H1 (cell line): ENCODE measurements at regions of chr17 and their contacts with region 1.

Region 1: DNA sequence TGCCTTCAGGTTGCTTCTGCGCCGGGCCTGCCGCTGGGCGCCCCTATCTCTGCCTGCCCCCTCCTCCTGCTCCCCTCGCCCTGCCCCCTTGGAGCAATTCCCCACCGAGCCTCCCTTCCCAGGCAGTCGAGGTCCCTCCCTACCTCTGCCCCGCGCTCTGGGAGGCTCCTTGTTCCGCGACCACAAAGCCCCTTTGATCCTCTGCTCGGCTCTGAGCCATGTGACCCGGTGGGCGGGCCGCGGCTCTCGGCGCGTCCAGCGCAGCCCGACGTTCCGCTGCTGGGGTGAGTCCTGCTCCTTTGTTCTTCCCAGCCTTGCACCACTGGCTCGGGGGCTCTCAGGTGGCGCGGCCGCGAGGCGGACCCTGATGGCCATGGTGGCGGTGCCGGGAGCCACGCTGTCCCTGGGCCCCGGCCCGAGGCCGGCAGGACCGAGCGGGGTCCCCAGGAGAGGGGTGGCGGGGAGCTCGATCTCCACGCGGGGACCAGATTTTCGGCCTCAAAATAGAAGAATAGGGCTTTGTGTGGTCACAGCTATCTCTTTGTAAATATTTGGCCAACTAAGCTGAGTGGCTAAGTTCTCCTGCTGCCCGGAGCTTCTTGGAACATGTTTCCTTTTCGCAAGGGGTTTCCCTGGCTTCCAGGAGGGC is 310.6 kb downstream of the SEC14L1 start:
- DNase-seq: peak; percentile 71 to 88
- H3K4me3 ChIP-seq: peak overlapping the region; percentile 50 to 78 (median 61)
- H3K27ac ChIP-seq: peak overlapping the region; percentile 66
- H3K4me1 ChIP-seq: peaks cover 26 to 45% (median 36%) of the 10 kb centered on the region in 4 experiments
- H3K27me3 ChIP-seq: no peaks in the 10 kb centered on the region
- CTCF ChIP-seq: no peak
- EP300 ChIP-seq: 0 out of 3 replicates have a peak, but pooled peaks of 1 of the 2 experiments have one; percentile 12
- POLR2A ChIP-seq: peak; percentile 46 to 80
- RAD21 ChIP-seq: no peak; a peak in 1 of 4 replicates

Region 2: DNA sequence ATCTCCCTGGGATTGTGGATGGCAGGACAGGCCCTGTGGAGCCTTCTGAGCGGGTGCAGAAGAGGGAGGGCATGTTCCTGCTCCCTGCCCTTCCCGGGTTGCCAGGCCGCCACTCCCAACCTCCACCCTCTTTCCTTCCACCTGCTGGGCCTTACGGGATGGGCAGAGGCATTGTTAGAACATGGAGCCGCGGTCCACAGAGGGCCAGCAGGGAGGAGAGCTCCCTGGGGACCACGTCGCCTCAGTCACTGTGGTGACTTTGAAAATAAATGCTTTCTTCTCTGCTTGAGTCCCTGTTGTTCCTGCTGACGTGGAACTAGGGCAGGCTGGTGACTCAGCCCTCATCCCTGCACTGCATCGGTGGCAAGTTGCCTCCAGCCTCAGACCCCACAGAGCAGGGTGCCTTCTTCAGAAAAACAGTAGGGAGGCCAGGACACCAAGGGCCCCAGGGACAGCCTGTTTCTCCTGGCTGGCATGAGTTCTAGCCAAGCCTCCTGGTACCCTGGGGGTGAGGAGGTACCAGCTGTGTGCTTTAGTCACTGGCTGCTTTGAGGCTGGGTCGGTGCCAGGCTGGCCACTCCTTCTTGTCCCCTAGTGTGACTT is 85.7 kb before region 1 on chr17:
- CTCF ChIA-PET with region 1: no interaction called
- POLR2A ChIA-PET with region 1: no interaction called
- DNase-seq: no peak
- H3K4me3 ChIP-seq: no peak overlapping the region
- H3K27ac ChIP-seq: no peak overlapping the region
- H3K4me1 ChIP-seq: peaks cover 4 to 17% (median 11%) of the 10 kb centered on the region in 4 experiments
- H3K27me3 ChIP-seq: no peaks in the 10 kb centered on the region
- CTCF ChIP-seq: no peak
- EP300 ChIP-seq: no peak
- POLR2A ChIP-seq: no peak
- RAD21 ChIP-seq: no peak

Region 3: GRCh38 chr17:77382966-77383612 is 68.3 kb before region 1 on chr17:
- CTCF ChIA-PET with region 1: no interaction called
- POLR2A ChIA-PET with region 1: no interaction called
- DNase-seq: no peak
- H3K4me3 ChIP-seq: peak overlapping the region in 1 of 4 experiments; percentile 37; a peak in 2 of 8 replicates
- H3K27ac ChIP-seq: no peak overlapping the region
- H3K4me1 ChIP-seq: peaks cover 0 to 60% (median 40%) of the 10 kb centered on the region in 4 experiments; a peak in 6 of 7 replicates
- H3K27me3 ChIP-seq: no peaks in the 10 kb centered on the region
- CTCF ChIP-seq: no peak
- EP300 ChIP-seq: no peak
- POLR2A ChIP-seq: no peak
- RAD21 ChIP-seq: no peak

Region 4: DNA sequence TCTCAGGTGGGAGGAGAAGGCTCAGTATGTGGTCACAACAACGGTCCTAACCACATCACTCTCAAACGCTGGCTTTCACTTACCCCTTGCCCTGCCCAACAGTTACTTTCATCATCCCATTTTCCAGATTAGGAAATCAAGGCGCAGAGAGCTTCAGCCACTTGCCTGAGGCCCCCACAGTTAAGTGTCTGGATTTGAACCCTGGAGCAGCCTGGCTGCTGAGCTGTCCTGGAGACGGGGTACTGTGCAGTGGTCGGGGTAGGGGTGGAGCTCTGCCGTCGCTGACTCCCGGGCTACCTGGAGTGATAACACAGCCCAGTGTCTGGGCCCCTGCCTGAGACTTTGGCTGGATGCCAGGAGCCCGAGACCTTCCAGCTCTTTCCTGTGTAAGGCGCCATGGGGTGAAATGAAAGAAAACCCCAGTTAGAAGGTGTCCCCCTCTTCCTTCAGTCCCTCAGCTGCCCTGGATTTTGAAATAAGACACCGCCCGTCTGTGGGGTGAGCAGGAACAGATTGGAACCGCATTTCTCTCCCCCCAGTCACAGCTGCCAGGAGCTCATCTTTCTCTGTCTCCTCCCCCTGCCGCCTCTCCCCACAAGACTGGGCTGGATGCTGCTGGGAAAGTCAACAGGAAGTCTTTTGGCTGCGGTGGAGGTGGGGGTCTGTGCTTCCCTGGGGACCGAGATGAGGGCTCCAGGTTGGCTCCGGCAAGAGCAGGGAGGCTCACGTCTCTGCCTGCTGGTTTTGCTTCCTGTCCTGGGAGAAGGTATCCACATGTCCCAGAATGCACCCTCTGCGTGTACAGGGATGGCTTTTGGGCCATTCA is 30.4 kb before region 1 on chr17:
- CTCF ChIA-PET with region 1: interaction called, 5 read pairs
- POLR2A ChIA-PET with region 1: interaction called, 11 read pairs
- DNase-seq: peak in 1 of 2 experiments; percentile 69
- H3K4me3 ChIP-seq: peak overlapping the region in 1 of 4 experiments; percentile 3; a peak in 1 of 8 replicates
- H3K27ac ChIP-seq: peak overlapping the region; percentile 70
- H3K4me1 ChIP-seq: peaks cover 7 to 52% (median 42%) of the 10 kb centered on the region in 4 experiments
- H3K27me3 ChIP-seq: no peaks in the 10 kb centered on the region
- CTCF ChIP-seq: no peak
- EP300 ChIP-seq: no peak
- POLR2A ChIP-seq: no peak
- RAD21 ChIP-seq: no peak

Region 5: GRCh38 chr17:77465358-77466041 is 14.1 kb after region 1 on chr17:
- CTCF ChIA-PET with region 1: interaction called, 6 read pairs
- POLR2A ChIA-PET with region 1: interaction called, 33 read pairs
- DNase-seq: peak in 1 of 2 experiments; percentile 63
- H3K4me3 ChIP-seq: peak overlapping the region in 3 of 4 experiments; percentile 17 to 52 (median 17); a peak in 4 of 8 replicates
- H3K27ac ChIP-seq: peak overlapping the region; percentile 76
- H3K4me1 ChIP-seq: peaks cover 21 to 32% (median 26%) of the 10 kb centered on the region in 4 experiments
- H3K27me3 ChIP-seq: no peaks in the 10 kb centered on the region
- CTCF ChIP-seq: no peak
- EP300 ChIP-seq: no peak
- POLR2A ChIP-seq: no peak
- RAD21 ChIP-seq: no peak

Region 6: GRCh38 chr17:77471984-77472461 is 20.7 kb after region 1 on chr17:
- CTCF ChIA-PET with region 1: interaction called, 7 read pairs
- POLR2A ChIA-PET with region 1: interaction called, 33 read pairs
- DNase-seq: no peak
- H3K4me3 ChIP-seq: peak overlapping the region in 1 of 4 experiments; percentile 17; a peak in 2 of 8 replicates
- H3K27ac ChIP-seq: peak overlapping the region; percentile 76
- H3K4me1 ChIP-seq: peaks cover 29 to 66% (median 45%) of the 10 kb centered on the region in 4 experiments
- H3K27me3 ChIP-seq: no peaks in the 10 kb centered on the region
- CTCF ChIP-seq: no peak
- EP300 ChIP-seq: no peak
- POLR2A ChIP-seq: no peak
- RAD21 ChIP-seq: no peak